ENCODE measurements at regions of chr18 and their contacts with region 1.

Region 1: DNA sequence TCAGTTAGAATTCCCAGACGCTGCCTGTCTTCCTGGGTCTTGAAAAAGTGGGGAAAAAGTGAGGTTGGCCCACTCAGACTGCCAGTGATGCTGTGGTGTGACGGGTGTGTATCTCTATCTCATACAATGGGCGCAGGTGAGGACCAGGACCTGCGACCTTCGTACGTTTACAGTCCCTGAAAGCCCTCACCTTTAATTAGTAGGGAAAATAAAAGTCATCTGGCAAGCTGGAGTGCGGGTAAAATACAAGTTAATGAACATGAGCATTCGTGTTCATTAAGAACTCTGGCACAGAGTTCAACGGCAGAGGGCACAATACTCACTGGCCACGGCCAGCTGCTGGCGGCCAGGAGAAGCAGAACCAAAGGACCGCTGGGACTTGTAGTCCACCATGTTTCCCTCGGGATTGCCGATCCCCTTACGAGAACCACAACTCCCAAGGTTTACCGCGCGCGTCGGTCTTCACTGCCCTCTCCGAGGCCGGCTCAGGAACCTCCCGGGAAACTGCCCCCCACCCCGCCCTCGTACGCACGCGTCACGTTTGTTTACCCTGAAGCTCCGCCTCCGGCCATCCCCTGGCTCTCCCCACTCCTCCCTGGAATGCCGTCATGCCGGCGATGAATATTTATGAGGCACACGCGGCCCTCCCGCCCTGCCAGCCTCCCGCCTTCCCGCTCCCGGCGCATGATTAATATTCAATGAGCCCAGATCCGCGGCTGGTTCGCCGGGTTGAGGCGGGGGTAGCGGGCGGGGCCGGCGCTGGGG is 488 bp upstream of the PHLPP1 start:
- DNase-seq: peak; percentile 94
- H3K4me3 Mint-ChIP-seq: peak overlapping the region; percentile 85
- H3K27ac Mint-ChIP-seq: peak overlapping the region; percentile 90
- H3K4me1 Mint-ChIP-seq: peaks cover 24% of the 10 kb centered on the region
- H3K27me3 Mint-ChIP-seq: peaks cover 25% of the 10 kb centered on the region

Region 2: DNA sequence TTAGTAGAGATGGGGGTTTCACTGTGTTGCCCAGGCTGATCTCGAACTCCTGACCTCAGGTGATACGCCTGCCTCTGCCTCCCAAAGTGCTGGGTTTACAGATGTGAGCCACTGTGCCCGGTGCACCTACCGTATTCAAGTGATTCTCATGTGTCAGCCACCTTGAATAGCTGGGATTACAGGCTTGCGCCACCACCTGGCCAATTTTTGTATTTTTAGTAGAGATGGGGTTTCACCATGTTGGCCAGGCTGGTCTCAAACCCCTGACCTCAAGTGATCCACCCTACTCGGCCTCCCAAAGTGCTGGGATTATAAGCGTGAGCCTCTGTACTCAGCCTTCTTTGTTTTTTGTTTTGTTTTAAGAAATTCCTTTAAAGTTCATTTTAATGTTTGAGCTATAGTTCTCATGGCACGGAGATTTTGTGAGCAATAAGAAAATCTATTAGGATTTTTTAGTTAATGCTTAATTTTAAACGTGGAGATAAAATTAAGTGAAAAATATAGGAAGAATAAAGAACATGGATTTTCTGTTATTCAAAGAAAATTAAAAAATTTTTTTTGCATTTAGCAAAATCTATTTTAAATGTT is 243.1 kb after region 1 on chr18:
- CTCF ChIA-PET with region 1: interaction called, 70 read pairs
- DNase-seq: peak; percentile 64
- H3K4me3 Mint-ChIP-seq: no peak overlapping the region
- H3K27ac Mint-ChIP-seq: no peak overlapping the region
- H3K4me1 Mint-ChIP-seq: peaks cover 13% of the 10 kb centered on the region
- H3K27me3 Mint-ChIP-seq: no peaks in the 10 kb centered on the region